ENCODE measurements at regions of chr10 and their contacts with region 1.

Region 1: DNA sequence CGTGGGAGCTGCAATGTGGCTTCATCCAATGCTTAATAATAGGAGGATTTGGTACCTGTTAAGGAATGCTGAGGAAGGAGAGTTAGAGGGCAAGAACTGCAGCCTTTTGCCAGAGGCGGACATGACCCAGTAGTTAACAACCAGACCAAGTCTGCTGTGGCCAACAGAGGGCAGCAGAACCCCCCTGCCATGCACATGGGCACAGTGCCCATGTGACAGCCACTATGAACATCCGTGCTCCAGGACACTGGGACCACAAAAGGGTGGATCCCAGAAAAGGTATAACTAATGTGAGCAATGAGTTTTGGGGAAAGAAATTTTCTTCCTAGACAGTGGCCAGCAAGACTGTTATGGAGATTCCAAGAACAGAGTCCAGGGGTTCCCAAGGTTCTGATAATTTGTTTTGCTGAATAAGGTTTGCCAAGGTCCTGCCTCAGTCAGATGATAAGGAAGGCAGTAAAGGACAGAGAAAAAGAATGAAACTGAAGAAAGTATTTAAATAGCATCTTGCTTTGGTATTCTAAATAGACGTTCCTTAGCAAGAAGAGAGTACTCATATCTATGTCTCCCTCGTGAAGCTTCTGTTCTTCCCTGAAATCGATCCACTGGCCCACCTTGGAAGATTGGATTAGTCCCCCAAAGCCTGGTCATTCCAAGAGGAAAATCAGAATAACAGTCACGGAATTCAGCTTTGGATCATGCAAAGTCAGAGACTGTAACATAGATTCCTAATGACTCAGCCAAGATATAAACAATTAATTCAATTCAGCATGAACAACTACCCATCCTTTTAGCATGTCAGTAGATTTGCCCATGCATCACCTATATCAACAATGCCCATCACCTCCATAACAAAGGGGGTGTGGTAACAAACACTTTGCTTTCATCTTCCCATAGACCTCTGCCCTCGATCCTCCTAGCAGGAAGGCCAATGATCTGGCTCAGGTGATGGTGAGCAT is 56.0 kb downstream of the LGI1 start:
- DNase-seq: no peak
- H3K4me3 ChIP-seq: no peak overlapping the region
- H3K27ac ChIP-seq: no peak overlapping the region
- H3K4me1 ChIP-seq: no peaks in the 10 kb centered on the region
- H3K27me3 ChIP-seq: no peaks in the 10 kb centered on the region
- CTCF ChIP-seq: no peak
- POLR2A ChIP-seq: no peak

Region 2: GRCh38 chr10:93702211-93703001 is 111.4 kb before region 1 on chr10 and contains the start of gene FRA10AC1:
- intact Hi-C with region 1: loop called (anchors 5 kb)
- DNase-seq: peak in 1 of 2 donors; percentile 96
- H3K4me3 ChIP-seq: peak within 1 kb of the TSS; percentile 52 to 61
- H3K27ac ChIP-seq: peak within 1 kb of the TSS; percentile 79
- H3K4me1 ChIP-seq: peaks cover 19% of the 10 kb centered on the region
- H3K27me3 ChIP-seq: no peaks in the 10 kb centered on the region
- CTCF ChIP-seq: peak in 2 of 3 experiments; percentile 10 to 20
- POLR2A ChIP-seq: peak in 1 of 2 donors; percentile 74
- total RNA-seq, gene FRA10AC1: 15.7 TPM

Measured in vagina (tissue), 2 donors.